Adrenal gland (tissue), 19 donors: ENCODE measurements at regions of chrX and their contacts with region 1.

Region 1: DNA sequence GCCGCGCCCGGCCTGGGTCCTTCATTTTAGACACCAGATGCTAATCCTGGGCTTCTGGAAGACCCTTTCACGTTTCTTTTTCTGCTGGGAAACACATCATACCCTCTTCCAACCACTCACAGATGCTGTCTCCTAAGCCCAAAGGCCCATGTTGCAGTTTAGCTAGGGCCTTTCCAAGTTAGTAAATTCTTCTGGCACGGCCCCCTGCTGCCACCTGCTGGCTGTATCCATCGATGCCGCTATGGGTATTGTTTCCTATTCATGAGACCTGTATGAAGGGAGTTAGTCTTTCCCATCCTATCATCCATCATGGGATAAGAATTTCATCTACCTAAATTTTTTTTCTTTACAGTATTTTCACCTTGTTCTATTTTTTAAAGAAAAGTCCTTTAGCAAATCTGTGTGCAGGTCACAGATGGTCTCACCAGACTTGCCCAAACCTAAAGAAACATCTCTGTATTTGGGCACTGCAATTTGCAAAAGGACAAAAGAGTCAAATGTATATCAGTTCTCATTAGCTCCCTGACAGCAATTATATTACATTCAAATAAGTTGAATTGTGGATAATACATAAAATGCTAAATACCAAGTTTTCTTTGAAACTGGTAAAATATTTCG is 37.8 kb upstream of the SLC9A7 start:
- DNase-seq: peak; percentile 73 to 94 (median 82)
- H3K4me3 ChIP-seq: no peak overlapping the region
- H3K27ac ChIP-seq: no peak overlapping the region
- H3K4me1 ChIP-seq: no peaks in the 10 kb centered on the region
- H3K27me3 ChIP-seq: peaks cover 10% of the 10 kb centered on the region
- CTCF ChIP-seq: peak; percentile 59 to 84 (median 76)
- POLR2A ChIP-seq: no peak

Region 2: DNA sequence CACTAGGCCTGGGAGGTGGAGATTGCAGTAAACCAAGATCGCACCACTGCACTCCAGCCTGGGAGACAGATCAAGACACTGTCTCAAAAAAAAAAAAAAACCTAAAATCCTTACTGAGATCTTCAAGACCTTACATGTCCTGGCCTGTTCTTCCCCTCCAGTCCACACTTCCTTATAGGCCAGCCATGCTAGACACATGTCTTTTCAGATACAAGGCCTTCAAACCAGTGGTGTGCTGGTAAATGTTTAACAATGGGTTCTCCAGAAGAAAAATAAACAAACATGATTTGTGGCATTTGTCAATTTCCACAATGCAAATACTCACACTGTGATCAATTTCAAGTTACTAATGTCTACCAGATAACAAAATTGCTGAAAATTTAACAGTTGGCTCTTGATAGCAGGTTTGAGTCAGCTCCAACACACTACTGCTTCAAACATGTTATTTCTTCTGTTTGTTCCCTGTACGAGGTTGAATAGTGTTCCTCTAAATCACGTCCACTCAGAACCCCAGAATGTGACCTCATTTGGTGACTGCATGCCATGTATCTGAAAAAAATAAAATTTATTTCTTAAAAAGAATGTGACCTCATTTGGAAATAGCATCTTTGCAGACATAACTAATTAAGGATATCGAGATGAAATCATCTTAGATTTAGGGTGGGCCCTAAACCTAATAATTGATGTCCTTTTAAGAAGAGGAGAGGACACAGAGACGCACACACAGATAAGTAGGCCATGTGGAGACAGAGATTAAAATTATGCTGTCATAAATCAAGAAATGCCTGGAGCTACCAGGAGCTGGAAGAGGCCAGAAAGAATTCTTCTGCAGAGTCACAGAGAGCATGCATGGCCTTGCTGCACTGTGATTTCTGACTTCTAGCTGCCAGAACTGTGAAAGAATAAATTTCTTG is 395.9 kb before region 1 on chrX:
- intact Hi-C with region 1: no loop called
- DNase-seq: no peak
- H3K4me3 ChIP-seq: no peak overlapping the region
- H3K27ac ChIP-seq: no peak overlapping the region
- H3K4me1 ChIP-seq: no peaks in the 10 kb centered on the region
- H3K27me3 ChIP-seq: no peaks in the 10 kb centered on the region
- CTCF ChIP-seq: no peak
- POLR2A ChIP-seq: no peak

Region 3: DNA sequence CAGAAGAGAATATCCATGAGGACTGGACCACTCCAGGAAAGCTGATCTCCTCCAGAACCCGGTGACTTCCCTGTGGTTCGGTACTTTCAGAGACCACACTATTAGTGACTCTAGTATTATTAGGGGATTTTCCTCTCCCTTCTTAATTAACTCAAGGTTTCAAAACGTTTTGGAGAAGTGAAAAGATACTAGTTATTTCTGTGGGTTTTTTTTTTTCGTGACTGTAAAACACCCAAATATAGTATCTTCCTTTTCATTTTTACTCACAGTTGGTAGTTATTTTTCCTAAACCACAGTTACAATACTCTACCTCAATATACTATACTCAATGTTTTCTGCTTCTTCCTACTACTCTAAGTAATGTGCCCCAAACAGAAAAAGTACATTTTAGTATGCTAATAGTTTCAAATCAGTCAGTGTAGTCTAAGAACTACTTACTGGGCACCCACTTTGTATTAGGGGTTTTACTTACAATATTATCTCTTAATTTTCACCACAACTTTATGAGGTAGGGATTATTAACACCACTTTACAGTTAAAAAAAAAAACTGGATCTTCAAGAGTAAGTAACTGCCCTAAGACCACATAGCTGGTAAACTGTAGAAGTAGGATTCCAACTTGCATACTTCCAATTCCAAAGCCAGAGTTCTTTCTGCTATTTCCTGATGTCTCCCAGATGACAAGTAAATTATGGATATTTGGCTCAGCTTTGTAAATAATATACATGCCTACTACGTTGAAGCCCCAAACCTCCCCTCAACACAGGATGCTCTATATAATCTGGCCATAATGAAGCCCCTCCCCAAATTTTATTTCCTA is 82.8 kb before region 1 on chrX:
- intact Hi-C with region 1: no loop called
- DNase-seq: no peak
- H3K4me3 ChIP-seq: no peak overlapping the region
- H3K27ac ChIP-seq: no peak overlapping the region
- H3K4me1 ChIP-seq: no peaks in the 10 kb centered on the region
- H3K27me3 ChIP-seq: no peaks in the 10 kb centered on the region
- CTCF ChIP-seq: no peak
- POLR2A ChIP-seq: no peak

Region 4: DNA sequence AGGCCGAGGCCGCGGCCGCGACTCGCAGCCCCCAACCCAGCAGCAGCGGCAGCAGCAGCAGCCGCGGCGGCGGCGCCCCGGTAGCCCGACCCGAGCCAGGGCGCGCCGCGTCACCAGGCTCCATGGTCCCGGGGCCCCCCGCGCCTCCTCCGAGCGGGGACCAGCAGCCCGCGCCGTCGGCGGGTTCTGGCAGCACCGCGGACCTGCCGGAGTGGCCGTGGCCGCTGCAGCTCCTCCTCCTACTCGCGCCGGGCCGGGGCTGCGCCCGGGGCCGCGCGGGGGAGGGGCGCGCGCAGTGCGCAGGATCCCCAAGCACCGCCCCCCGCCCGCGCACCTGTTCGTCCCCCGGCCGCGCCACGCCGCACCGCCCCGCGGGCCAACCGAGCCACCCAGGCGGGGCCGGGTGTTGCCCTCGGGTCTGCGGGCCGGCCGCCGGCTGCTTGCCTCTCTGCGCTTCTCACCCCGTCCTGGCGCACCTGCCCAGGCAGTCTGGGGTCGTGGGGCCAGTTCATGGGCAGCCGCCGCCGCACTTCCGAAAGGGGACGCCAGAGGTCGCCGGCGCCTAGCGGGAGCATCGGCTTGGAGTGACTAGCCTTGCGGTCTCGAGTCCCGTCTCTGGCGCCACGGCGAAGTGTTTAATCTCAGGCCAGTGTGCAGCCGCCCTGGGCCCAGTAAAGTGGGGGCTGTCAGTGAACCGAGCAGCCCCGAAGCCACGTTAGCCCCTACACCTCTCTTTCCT is 37.6 kb before region 1 on chrX and contains the start of gene SLC9A7:
- intact Hi-C with region 1: loop called in 1 of 2 experiments (anchors 2 kb)
- DNase-seq: peak; percentile 69 to 89 (median 78)
- H3K4me3 ChIP-seq: peak within 1 kb of the TSS in 2 of 4 donors; percentile 3 to 67
- H3K27ac ChIP-seq: peak within 1 kb of the TSS in 3 of 5 donors; percentile 34 to 87 (median 57)
- H3K4me1 ChIP-seq: no peaks in the 10 kb centered on the region
- H3K27me3 ChIP-seq: no peaks in the 10 kb centered on the region
- CTCF ChIP-seq: peak; percentile 58 to 94 (median 73)
- POLR2A ChIP-seq: peak; percentile 38 to 55
- total RNA-seq, gene SLC9A7: 3.5 to 22.8 (median 12.7) TPM